ENCODE measurements at regions of chrX and their contacts with region 1.

Region 1: DNA sequence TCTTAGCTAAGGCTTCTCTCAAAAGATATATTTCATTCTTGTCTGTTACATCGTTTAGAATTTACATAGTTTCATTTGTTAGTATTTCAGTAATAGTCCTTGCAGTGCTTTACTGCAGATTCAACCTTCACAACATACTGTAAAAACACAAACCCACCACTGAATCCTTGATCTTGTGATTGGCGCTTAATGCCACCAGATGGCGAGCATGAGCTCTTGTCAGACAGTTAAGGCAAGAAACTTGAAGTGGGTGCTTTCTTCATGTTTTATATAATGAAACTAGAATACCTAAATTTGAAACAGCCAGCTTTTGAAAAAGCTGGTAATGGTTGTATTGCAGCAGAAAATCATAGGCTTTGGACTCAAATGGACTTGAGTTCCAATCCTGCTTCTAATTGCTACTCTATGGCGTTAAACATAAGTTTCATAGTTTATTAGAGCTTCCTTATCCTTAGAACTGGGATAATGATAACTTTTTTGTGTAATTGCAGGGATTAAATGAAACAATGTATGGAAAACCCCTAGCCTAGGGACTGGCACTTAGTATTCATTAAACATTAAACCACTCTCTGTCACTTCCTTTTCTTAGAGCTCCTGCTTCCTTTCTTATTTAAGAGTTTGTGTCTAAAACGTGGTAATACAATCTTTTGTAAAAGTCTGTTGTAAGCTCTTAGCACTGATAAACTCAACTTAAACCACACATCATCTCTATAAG is 95.1 kb downstream of the USP9X start:
- DNase-seq: peak; percentile 57
- H3K4me3 Mint-ChIP-seq: no peak overlapping the region
- H3K27ac Mint-ChIP-seq: peak overlapping the region; percentile 80
- H3K4me1 Mint-ChIP-seq: peaks cover 48% of the 10 kb centered on the region
- H3K27me3 Mint-ChIP-seq: no peaks in the 10 kb centered on the region

Region 2: DNA sequence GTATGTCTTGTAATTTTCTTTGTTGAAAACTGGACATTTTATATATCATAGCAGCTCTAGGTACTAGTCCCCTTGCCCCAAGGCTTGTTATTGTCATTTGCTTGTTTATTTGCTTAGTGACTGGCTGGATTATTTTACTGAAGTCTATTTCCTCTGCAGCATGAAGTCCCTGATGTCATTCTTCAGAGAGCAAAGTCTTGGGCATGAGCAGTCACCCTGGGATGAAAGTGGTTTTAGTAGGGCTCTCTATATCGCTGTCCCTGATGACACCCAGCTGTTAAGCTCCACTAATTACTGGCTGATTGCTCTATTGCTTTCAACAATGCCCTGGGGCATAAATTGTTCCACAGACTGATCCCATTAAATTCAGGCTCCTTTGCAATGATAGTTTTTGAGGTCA is 208.6 kb before region 1 on chrX:
- CTCF ChIA-PET with region 1: no interaction called
- POLR2A ChIA-PET with region 1: no interaction called
- DNase-seq: no peak
- H3K4me3 Mint-ChIP-seq: no peak overlapping the region
- H3K27ac Mint-ChIP-seq: no peak overlapping the region
- H3K4me1 Mint-ChIP-seq: peaks cover 2% of the 10 kb centered on the region
- H3K27me3 Mint-ChIP-seq: no peaks in the 10 kb centered on the region

Region 3: DNA sequence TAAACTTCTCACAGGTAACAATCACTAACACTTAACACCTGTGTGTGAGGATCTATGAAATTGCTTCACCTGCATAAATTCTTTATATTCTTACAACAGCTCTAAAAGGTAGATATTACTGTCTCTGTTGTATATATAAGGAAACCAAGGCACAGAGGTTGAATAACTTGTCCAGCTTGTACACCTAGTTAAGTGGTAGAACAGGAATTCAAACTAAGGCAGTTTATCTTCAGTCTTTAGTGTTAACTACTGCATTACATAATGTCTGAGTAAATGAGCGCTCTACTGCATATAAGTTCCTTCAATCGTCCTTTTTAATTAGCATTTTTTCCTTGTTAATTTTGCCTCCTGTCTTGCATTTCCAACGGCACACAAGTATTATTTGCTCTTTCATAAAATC is 80.2 kb before region 1 on chrX:
- CTCF ChIA-PET with region 1: no interaction called
- POLR2A ChIA-PET with region 1: no interaction called
- DNase-seq: no peak
- H3K4me3 Mint-ChIP-seq: no peak overlapping the region
- H3K27ac Mint-ChIP-seq: no peak overlapping the region
- H3K4me1 Mint-ChIP-seq: peaks cover 32% of the 10 kb centered on the region
- H3K27me3 Mint-ChIP-seq: no peaks in the 10 kb centered on the region

Region 4: GRCh38 chrX:41258226-41258625 is 77.9 kb after region 1 on chrX:
- CTCF ChIA-PET with region 1: interaction called, 12 read pairs
- POLR2A ChIA-PET with region 1: no interaction called
- DNase-seq: no peak
- H3K4me3 Mint-ChIP-seq: no peak overlapping the region
- H3K27ac Mint-ChIP-seq: no peak overlapping the region
- H3K4me1 Mint-ChIP-seq: peaks cover 7% of the 10 kb centered on the region
- H3K27me3 Mint-ChIP-seq: no peaks in the 10 kb centered on the region

Measured in activated CD4-positive, alpha-beta T cell treated with anti-CD3 and anti-CD28 coated beads, Interleukin-2, amount 10 ng/mL, durations not matched to agents 7 days and 5 days (primary cell).